SK-N-SH (cell line): ENCODE measurements at regions of chr1 and their contacts with region 1.

Region 1: GRCh38 chr1:56584910-56585528 is 5.7 kb upstream of the PLPP3 start:
- DNase-seq: peak; percentile 62
- H3K4me3 ChIP-seq: no peak overlapping the region
- H3K27ac ChIP-seq: peak overlapping the region in 1 of 2 experiments; percentile 90; a peak in 2 of 4 replicates
- H3K4me1 ChIP-seq: peaks cover 0 to 9% of the 10 kb centered on the region in 2 experiments; a peak in 2 of 4 replicates
- H3K27me3 ChIP-seq: no peaks in the 10 kb centered on the region
- CTCF ChIP-seq: peak; percentile 87
- EP300 ChIP-seq: 0 out of 4 replicates have a peak, but pooled peaks of 1 of the 2 experiments have one; percentile 8
- RAD21 ChIP-seq: peak; percentile 98

Region 2: GRCh38 chr1:55284852-55285251 is 1300.2 kb before region 1 on chr1:
- CTCF ChIA-PET with region 1: interaction called, 70 read pairs
- POLR2A ChIA-PET with region 1: no interaction called
- DNase-seq: peak; percentile 36
- H3K4me3 ChIP-seq: no peak overlapping the region
- H3K27ac ChIP-seq: peak overlapping the region in 1 of 2 experiments; percentile 82; a peak in 2 of 4 replicates
- H3K4me1 ChIP-seq: peaks cover 3 to 4% of the 10 kb centered on the region in 2 experiments; a peak in 3 of 4 replicates
- H3K27me3 ChIP-seq: no peaks in the 10 kb centered on the region
- CTCF ChIP-seq: peak; percentile 78
- EP300 ChIP-seq: 0 out of 4 replicates have a peak, but pooled peaks of 1 of the 2 experiments have one; percentile 29
- RAD21 ChIP-seq: peak; percentile 84

Region 3: DNA sequence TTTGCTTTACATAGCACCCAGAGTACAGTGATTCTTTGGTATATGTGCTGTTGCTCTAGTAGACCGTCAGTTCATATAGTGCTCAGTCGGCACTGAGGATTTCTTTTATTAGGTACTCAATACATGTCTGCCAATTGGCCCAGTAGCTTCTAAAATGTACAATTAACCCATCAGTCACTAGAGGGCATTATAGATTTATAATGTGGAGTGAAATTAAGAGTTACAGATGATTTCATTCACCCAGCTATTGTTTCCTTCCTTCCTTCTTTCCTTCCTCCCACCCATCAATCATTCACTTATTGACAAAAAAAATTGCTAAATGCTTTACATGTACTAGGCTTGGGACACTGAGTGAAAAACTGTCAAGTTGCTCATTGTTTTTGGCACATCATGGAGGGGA is 1106.3 kb before region 1 on chr1:
- CTCF ChIA-PET with region 1: interaction called, 11 read pairs
- POLR2A ChIA-PET with region 1: no interaction called
- DNase-seq: no peak
- H3K4me3 ChIP-seq: no peak overlapping the region
- H3K27ac ChIP-seq: peak overlapping the region in 1 of 2 experiments; percentile 14; a peak in 1 of 4 replicates
- H3K4me1 ChIP-seq: peaks cover 0 to 12% of the 10 kb centered on the region in 2 experiments; a peak in 2 of 4 replicates
- H3K27me3 ChIP-seq: no peaks in the 10 kb centered on the region
- CTCF ChIP-seq: peak; percentile 47
- EP300 ChIP-seq: no peak
- RAD21 ChIP-seq: peak; percentile 64

Region 4: DNA sequence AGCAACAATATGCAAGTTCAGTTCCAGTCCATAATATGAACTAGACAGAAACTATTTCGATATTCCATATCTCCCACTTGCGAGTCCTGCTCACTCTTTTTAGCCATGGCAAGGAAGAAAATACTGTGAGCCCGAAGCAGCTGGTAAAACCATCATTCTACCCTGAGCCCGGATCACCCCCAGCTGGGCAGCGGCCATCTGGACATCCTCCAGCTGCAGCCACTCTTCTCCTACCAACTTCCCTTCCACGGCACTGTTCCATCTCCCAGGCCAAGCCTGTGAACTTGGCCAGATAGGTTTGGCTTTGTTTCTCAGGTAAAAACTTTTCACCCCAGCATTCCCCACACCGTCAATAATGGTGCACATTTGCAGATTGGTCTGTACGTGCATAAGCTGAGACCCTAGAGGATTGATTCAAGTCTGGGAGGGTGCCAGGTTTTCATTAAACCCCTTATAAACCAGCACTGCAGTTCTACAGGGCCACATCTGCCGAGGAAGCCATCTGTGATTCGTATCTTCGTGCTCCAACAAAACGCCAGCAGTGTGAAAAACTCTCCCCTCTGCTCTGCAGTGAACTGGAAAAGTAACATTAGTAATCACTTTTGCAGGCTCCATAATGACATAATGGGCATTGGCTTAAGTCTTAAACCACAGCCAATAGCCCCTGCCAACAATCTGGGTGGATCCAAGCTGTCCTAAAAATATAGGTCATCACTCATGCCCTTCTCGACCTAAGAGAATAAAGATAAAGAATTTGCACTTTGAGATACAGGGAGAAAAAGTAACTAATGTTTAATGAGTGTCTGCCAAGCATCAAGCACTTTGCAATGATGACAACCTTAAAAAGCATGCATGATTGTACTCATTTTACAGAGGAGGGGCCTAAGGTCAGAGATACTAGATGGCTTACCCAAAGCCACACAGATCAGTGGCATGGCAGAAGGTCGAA is 210.7 kb before region 1 on chr1:
- CTCF ChIA-PET with region 1: interaction called, 12 read pairs
- POLR2A ChIA-PET with region 1: no interaction called
- DNase-seq: peak; percentile 68
- H3K4me3 ChIP-seq: peak overlapping the region in 1 of 2 experiments; percentile 27; a peak in 1 of 4 replicates
- H3K27ac ChIP-seq: peak overlapping the region; percentile 31 to 100; a peak in 3 of 4 replicates
- H3K4me1 ChIP-seq: peaks cover 7 to 64% of the 10 kb centered on the region in 2 experiments; a peak in 2 of 4 replicates
- H3K27me3 ChIP-seq: no peaks in the 10 kb centered on the region
- CTCF ChIP-seq: no peak
- EP300 ChIP-seq: peak; percentile 72 to 86
- RAD21 ChIP-seq: no peak; the same call in none of the 2 replicates

Region 5: GRCh38 chr1:56666112-56666608 is 81.1 kb after region 1 on chr1:
- CTCF ChIA-PET with region 1: no interaction called
- POLR2A ChIA-PET with region 1: no interaction called
- DNase-seq: no peak
- H3K4me3 ChIP-seq: no peak overlapping the region
- H3K27ac ChIP-seq: no peak overlapping the region
- H3K4me1 ChIP-seq: no peaks in the 10 kb centered on the region
- H3K27me3 ChIP-seq: no peaks in the 10 kb centered on the region
- CTCF ChIP-seq: no peak
- EP300 ChIP-seq: no peak
- RAD21 ChIP-seq: no peak

Region 6: DNA sequence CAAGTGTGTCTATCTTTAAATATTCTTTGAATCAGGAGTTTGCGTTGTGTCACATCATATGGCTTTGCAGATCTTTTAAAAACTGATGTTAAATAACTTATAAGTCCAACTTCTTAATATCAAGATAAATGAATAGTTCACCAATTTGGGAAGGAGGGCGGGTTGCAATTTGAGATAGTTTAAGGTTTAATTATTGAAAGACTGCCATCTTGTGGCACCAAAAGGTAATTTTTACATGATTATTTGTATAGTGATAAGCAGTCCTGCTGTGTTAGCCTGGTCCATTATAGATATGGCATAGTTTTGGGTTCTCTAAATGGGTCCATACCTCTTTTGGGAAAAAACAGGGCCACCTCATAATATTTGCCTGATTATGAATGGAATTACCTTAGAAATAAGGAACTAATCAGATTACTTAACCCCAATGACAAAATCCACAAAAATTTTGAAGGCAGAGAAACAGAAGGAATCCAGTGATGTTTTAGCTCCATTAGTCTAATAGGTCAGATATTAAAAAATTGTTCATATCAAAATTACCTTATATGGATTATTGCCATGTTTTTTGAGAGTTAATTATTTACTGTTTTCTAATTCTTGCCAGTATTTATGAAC is 124.4 kb after region 1 on chr1:
- CTCF ChIA-PET with region 1: interaction called, 10 read pairs
- POLR2A ChIA-PET with region 1: no interaction called
- DNase-seq: peak; percentile 32
- H3K4me3 ChIP-seq: no peak overlapping the region; a peak in 1 of 4 replicates
- H3K27ac ChIP-seq: no peak overlapping the region
- H3K4me1 ChIP-seq: peaks cover 0 to 12% of the 10 kb centered on the region in 2 experiments; a peak in 3 of 4 replicates
- H3K27me3 ChIP-seq: no peaks in the 10 kb centered on the region
- CTCF ChIP-seq: peak; percentile 75
- EP300 ChIP-seq: no peak
- RAD21 ChIP-seq: peak; percentile 75